Activated naive CD4-positive, alpha-beta T cell treated with anti-CD3 and anti-CD28 coated beads for 36 hours (primary cell): ENCODE measurements at regions of chr4 and their contacts with region 1.

Region 1: DNA sequence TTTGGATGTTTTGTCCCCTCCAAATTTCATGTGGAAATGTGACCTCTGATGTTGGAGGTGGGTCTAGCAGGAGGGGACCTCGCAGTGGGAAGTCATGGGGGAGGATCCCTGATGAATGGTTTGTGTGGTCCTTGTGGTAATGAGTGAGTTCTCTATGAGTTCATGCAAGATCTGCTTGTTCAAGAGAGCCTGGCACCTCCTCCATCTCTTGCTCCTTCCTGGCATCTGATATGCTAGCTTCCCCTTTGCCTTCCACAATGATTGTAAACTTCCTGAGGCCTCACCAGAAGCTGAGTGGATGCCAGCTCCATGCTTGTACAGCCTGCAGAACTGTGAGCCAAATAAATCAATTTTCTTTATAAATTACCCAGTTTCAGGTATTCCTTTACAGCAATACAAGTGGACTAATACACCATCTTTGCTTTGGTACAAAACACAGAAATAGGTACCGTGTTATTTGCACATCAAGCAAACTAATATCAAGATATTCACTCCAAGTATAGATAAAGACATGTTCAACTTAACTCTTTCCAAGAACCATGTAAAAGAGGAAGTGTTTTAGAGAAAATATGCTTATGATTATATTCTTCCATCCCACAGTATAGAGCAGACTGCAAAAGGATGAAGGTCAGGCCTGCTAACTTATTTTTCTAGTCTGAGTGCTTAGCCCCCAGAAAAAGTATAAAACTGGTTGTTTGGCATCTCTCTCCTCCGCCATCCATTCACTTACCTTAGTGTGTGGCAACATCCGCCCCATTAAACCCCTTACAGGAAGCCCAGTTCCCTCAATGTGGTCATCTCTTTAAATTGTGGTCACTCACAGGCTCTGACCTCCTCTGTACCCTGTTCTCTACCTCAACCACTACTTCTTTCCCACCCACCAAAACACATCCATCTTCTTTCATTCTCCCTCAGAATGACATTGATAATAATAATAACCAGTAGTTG is 6.7 kb downstream of the ARAP2 start:
- DNase-seq: no peak
- H3K4me3 Mint-ChIP-seq: no peak overlapping the region
- H3K27ac Mint-ChIP-seq: no peak overlapping the region
- H3K4me1 Mint-ChIP-seq: peaks cover 57% of the 10 kb centered on the region
- H3K27me3 Mint-ChIP-seq: no peaks in the 10 kb centered on the region

Region 2: DNA sequence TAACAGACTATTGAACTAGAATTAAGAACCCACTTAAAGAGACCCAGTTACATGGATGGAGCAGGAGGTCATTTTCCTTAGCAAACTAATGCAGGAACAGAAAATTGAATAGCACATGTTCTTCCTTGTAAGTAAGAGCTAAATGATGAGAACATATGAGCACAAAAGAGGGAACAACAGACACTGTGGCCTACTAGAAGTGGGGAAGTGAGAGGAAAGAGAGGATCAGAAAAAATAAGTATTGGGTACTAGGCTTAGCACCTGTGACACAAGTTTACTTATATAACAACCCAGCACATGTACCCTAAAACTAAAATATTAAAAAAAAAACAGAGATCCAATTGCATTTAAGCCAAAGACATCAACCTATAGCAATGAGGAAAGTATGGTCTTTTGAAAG is 19.5 kb before region 1 on chr4:
- CTCF ChIA-PET with region 1: no interaction called
- intact Hi-C with region 1: loop called (anchors 2 kb)
- DNase-seq: no peak
- H3K4me3 Mint-ChIP-seq: no peak overlapping the region
- H3K27ac Mint-ChIP-seq: no peak overlapping the region
- H3K4me1 Mint-ChIP-seq: peaks cover 40% of the 10 kb centered on the region
- H3K27me3 Mint-ChIP-seq: no peaks in the 10 kb centered on the region

Region 3: DNA sequence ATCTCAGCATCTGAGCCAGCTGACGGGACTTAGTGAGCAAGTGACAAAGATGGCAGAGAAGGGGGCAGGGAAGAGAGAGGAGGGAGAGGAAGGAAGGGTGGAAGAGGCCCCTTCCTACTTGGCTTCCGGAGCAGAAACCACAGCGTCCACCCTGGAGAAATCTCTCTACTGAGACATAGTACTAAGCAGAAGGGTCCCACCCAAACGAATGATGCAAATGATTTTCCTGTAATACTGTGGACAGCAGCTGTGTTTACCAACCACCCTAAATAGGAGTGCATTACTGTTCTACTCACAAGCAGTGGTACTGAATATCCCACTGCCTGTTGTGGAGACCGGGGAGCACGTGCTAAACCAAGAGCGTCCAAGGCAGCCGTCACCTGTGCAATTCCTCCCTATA is 73.2 kb after region 1 on chr4:
- CTCF ChIA-PET with region 1: no interaction called
- intact Hi-C with region 1: no loop called
- DNase-seq: peak; percentile 51
- H3K4me3 Mint-ChIP-seq: no peak overlapping the region
- H3K27ac Mint-ChIP-seq: peak overlapping the region; percentile 50
- H3K4me1 Mint-ChIP-seq: peaks cover 30% of the 10 kb centered on the region
- H3K27me3 Mint-ChIP-seq: no peaks in the 10 kb centered on the region